ENCODE measurements at regions of chr6 and their contacts with region 1.

Region 1: GRCh38 chr6:53725791-53726431 is 60.4 kb upstream of the KLHL31 start:
- DNase-seq: no peak
- H3K4me3 ChIP-seq: no peak overlapping the region
- H3K27ac ChIP-seq: no peak overlapping the region
- H3K4me1 ChIP-seq: peaks cover 2 to 36% (median 33%) of the 10 kb centered on the region in 4 donors
- H3K27me3 ChIP-seq: no peaks in the 10 kb centered on the region
- CTCF ChIP-seq: peak; percentile 90 to 99 (median 93)
- EP300 ChIP-seq: no peak
- POLR2A ChIP-seq: no peak

Region 2: GRCh38 chr6:53492860-53493634 is 232.9 kb before region 1 on chr6:
- intact Hi-C with region 1: loop called (anchors 2 kb)
- DNase-seq: no peak
- H3K4me3 ChIP-seq: peak overlapping the region; percentile 13 to 32 (median 22)
- H3K27ac ChIP-seq: peak overlapping the region in 3 of 4 donors; percentile 22 to 60 (median 56)
- H3K4me1 ChIP-seq: peaks cover 0 to 49% (median 47%) of the 10 kb centered on the region in 4 donors
- H3K27me3 ChIP-seq: no peaks in the 10 kb centered on the region
- CTCF ChIP-seq: peak; percentile 67 to 78 (median 71)
- EP300 ChIP-seq: no peak
- POLR2A ChIP-seq: no peak

Region 3: DNA sequence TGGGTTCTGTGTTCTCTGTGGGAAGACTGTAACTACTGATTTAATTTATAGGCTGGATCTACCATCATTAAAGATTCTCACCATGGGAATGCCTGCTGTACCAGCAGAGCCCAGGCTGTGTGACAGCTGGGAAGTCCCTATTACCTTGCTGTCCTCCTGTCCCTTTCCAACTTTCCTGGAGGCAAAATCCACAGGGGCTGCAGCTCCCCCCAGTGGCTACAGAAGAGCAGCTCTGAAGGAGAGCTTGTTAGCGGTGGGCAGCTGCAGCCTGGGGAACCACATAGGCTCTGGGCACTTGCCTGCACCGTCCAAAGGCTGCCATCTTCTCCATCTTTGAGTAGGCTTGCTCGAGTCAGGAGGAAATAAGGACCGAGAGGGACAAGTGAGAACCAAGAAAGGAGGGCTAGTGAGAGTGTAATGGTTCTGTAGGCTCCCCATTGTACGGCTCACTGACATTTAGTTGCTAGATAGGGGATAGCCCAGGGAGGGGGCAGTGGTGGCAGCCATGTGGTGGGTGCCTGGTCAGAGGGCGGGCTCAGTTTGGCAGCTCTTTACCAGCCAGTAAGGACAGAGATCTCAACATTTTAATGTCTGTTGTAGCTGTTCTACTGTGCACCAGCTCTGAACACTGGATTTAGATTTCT is 230.3 kb after region 1 on chr6:
- intact Hi-C with region 1: loop called (anchors 5 kb)
- DNase-seq: no peak
- H3K4me3 ChIP-seq: no peak overlapping the region
- H3K27ac ChIP-seq: no peak overlapping the region
- H3K4me1 ChIP-seq: peaks cover 0 to 5% (median 1%) of the 10 kb centered on the region in 4 donors
- H3K27me3 ChIP-seq: no peaks in the 10 kb centered on the region
- CTCF ChIP-seq: peak; percentile 51 to 86 (median 61)
- EP300 ChIP-seq: no peak
- POLR2A ChIP-seq: no peak

Measured in esophagus muscularis mucosa (tissue), 4 donors.